Transverse colon (tissue), 4 donors: ENCODE measurements at regions of chr2 and their contacts with region 1.

Region 1: GRCh38 chr2:112884869-112885505 is 26.0 kb upstream of the IL37 start:
- DNase-seq: peak; percentile 76
- H3K4me3 ChIP-seq: no peak overlapping the region
- H3K27ac ChIP-seq: no peak overlapping the region
- H3K4me1 ChIP-seq: no peaks in the 10 kb centered on the region
- H3K27me3 ChIP-seq: no peaks in the 10 kb centered on the region
- CTCF ChIP-seq: peak; percentile 59 to 82 (median 81)
- EP300 ChIP-seq: no peak
- POLR2A ChIP-seq: no peak

Region 2: DNA sequence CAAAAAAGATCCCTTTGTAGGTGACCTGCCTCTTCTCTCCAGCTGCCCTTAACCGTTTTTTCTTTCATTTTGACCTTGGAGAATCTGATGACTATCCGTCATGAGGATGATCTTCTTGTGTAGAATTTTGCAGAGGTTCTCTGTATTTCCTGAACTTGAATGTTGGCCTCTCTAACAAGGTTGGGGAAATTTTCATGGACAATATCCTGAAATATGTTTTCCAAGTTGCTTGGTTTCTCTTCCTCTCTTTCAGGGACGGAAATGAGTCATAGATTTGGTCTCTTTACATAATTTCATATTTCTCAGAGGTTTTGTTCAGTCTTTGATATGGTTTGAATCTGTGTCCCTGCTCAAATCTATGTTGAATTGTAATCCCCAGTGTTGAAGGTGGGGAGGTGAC is 664.2 kb before region 1 on chr2:
- in situ Hi-C with region 1: no loop called
- intact Hi-C with region 1: no loop called
- DNase-seq: no peak
- H3K4me3 ChIP-seq: no peak overlapping the region
- H3K27ac ChIP-seq: no peak overlapping the region
- H3K4me1 ChIP-seq: no peaks in the 10 kb centered on the region
- H3K27me3 ChIP-seq: no peaks in the 10 kb centered on the region
- CTCF ChIP-seq: no peak
- EP300 ChIP-seq: no peak
- POLR2A ChIP-seq: no peak

Region 3: GRCh38 chr2:112764071-112765044 is 120.6 kb before region 1 on chr2 and contains the start of gene CKAP2L:
- in situ Hi-C with region 1: loop called in 1 of 4 experiments (anchors 25 kb)
- intact Hi-C with region 1: no loop called
- DNase-seq: peak; percentile 97
- H3K4me3 ChIP-seq: peak within 1 kb of the TSS; percentile 62 to 92 (median 68)
- H3K27ac ChIP-seq: peak within 1 kb of the TSS; percentile 49 to 75 (median 74)
- H3K4me1 ChIP-seq: peaks cover 5 to 25% (median 11%) of the 10 kb centered on the region in 4 donors
- H3K27me3 ChIP-seq: no peaks in the 10 kb centered on the region
- CTCF ChIP-seq: no peak
- EP300 ChIP-seq: no peak
- POLR2A ChIP-seq: no peak
- total RNA-seq, gene CKAP2L: 0.64 to 33.0 (median 2.2) TPM in 3 of 4 donors, not detected in the other

Region 4: DNA sequence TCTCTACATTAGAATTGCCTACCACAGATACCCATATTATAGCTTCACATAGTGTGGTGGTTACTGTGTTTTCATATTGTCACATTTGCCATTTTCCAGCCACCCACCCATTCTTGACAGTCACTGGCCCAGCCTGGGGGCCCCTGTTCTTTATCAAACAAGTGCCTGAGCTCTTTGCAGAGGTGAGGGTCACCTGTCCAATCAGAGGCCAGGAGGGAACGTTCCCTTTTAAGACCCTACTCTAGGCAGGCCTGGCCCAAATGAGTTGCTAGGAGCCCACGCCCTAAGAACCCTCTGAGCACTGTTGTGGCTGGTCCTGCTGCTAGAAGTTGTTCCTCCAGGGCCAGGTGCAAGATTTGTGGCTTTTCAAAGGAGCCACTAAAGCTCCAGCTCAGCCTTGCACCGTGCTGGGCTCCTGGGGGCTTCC is 31.2 kb after region 1 on chr2:
- in situ Hi-C with region 1: no loop called
- intact Hi-C with region 1: loop called (anchors 1 kb)
- DNase-seq: no peak
- H3K4me3 ChIP-seq: no peak overlapping the region
- H3K27ac ChIP-seq: no peak overlapping the region
- H3K4me1 ChIP-seq: peaks cover 0 to 3% (median 0%) of the 10 kb centered on the region in 4 donors
- H3K27me3 ChIP-seq: no peaks in the 10 kb centered on the region
- CTCF ChIP-seq: no peak
- EP300 ChIP-seq: no peak
- POLR2A ChIP-seq: no peak